Calu3 (cell line): ENCODE measurements at regions of chr3 and their contacts with region 1.

Region 1: DNA sequence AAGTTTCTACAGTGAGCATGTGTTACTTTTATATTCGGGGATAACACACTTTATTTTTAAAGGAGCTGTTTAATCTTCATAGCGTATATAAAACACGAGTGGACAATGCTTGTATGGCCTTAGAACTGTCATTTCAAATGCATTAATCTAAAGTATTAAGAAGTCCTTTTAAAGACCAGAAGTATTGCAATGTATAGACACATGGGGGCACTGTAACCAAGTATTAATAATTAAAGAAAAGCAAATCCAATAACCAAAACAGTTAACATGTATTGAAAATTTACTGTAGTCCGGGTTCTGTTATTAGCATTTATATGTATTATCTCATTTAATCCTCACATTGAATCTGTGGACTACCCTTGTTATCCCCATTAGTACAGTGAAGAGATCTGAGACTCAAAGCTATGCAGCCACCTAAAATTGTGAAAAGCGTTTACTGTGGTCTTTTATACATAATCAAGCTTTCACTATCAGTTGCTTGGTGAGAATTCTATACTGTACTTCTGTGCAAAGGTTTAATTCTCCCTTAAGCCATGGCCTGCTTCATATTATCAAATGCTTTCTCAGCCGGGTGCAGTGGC is 10.1 kb downstream of the ARL14 start:
- DNase-seq: no peak
- H3K4me3 Mint-ChIP-seq: no peak overlapping the region
- H3K27ac Mint-ChIP-seq: no peak overlapping the region
- H3K4me1 Mint-ChIP-seq: peaks cover 29% of the 10 kb centered on the region
- H3K27me3 Mint-ChIP-seq: no peaks in the 10 kb centered on the region
- CTCF ChIP-seq: peak; percentile 76

Region 2: GRCh38 chr3:160150525-160150924 is 536.5 kb before region 1 on chr3:
- CTCF ChIA-PET with region 1: no interaction called
- intact Hi-C with region 1: no loop called
- DNase-seq: no peak
- H3K4me3 Mint-ChIP-seq: no peak overlapping the region
- H3K27ac Mint-ChIP-seq: no peak overlapping the region
- H3K4me1 Mint-ChIP-seq: no peaks in the 10 kb centered on the region
- H3K27me3 Mint-ChIP-seq: no peaks in the 10 kb centered on the region
- CTCF ChIP-seq: no peak

Region 3: GRCh38 chr3:160629491-160629890 is 57.6 kb before region 1 on chr3:
- CTCF ChIA-PET with region 1: no interaction called
- intact Hi-C with region 1: no loop called
- DNase-seq: no peak
- H3K4me3 Mint-ChIP-seq: no peak overlapping the region
- H3K27ac Mint-ChIP-seq: no peak overlapping the region
- H3K4me1 Mint-ChIP-seq: no peaks in the 10 kb centered on the region
- H3K27me3 Mint-ChIP-seq: no peaks in the 10 kb centered on the region
- CTCF ChIP-seq: no peak

Region 4: GRCh38 chr3:160653512-160653911 is 33.5 kb before region 1 on chr3:
- CTCF ChIA-PET with region 1: interaction called, 3 read pairs
- intact Hi-C with region 1: loop called (anchors 5 kb)
- DNase-seq: no peak
- H3K4me3 Mint-ChIP-seq: no peak overlapping the region
- H3K27ac Mint-ChIP-seq: no peak overlapping the region
- H3K4me1 Mint-ChIP-seq: peaks cover 25% of the 10 kb centered on the region
- H3K27me3 Mint-ChIP-seq: no peaks in the 10 kb centered on the region
- CTCF ChIP-seq: no peak

Region 5: DNA sequence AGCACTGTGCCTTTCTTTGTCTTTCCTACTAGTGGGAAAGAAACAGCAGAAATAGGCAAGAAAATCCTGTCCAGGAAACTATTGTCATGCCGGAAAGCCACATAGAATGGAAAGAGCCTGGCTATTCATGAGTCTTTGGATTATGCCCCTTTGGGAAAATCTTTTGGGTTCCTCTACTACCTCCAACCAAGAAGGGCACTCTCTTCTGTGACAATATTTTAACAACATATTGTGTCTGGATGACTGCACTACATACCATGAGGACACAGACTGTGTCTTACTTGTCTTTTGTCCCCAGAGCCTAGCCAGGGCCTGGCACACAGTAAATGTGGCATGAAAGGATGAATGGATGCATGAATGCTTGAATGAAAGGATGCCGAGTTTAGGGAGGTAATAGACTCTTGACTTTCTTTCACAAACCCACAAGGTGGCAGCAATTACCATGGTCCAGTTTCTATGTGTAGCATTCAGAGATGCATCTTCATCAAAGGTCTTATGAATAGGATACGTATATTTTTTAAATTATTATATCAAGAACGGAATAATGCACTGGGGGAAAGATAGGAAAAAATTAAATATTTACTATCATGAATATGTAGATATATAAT is 20.2 kb after region 1 on chr3:
- CTCF ChIA-PET with region 1: no interaction called
- intact Hi-C with region 1: no loop called
- DNase-seq: peak; percentile 58
- H3K4me3 Mint-ChIP-seq: no peak overlapping the region
- H3K27ac Mint-ChIP-seq: no peak overlapping the region
- H3K4me1 Mint-ChIP-seq: no peaks in the 10 kb centered on the region
- H3K27me3 Mint-ChIP-seq: no peaks in the 10 kb centered on the region
- CTCF ChIP-seq: peak; percentile 62